Aorta (tissue), 5 donors: ENCODE measurements at regions of chr4 and their contacts with region 1.

Region 1: DNA sequence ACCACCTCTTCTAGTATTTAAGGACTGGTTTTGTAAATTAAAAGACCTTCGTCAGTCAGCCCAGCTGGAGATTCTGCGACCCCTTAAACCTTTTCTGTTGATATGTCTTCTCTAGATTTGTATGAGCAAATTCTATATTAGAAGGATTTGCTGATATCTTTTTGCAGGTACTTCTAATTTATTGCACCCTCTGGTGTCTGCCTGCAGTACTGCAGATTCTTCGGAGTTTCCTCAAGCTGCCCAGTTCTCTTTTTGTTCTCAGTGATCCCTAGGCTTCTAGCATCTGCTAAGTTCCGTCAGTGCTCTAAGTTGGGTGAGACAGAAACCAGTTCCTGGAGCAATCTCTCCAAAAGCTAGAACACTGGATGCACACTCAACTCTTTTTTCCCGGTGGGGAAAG is 545.2 kb downstream of the C4orf33 start:
- DNase-seq: peak in 1 of 2 donors; percentile 57
- ATAC-seq: peak; percentile 62
- H3K4me3 ChIP-seq: no peak overlapping the region
- H3K27ac ChIP-seq: no peak overlapping the region
- H3K4me1 ChIP-seq: no peaks in the 10 kb centered on the region
- H3K27me3 ChIP-seq: no peaks in the 10 kb centered on the region

Region 2: DNA sequence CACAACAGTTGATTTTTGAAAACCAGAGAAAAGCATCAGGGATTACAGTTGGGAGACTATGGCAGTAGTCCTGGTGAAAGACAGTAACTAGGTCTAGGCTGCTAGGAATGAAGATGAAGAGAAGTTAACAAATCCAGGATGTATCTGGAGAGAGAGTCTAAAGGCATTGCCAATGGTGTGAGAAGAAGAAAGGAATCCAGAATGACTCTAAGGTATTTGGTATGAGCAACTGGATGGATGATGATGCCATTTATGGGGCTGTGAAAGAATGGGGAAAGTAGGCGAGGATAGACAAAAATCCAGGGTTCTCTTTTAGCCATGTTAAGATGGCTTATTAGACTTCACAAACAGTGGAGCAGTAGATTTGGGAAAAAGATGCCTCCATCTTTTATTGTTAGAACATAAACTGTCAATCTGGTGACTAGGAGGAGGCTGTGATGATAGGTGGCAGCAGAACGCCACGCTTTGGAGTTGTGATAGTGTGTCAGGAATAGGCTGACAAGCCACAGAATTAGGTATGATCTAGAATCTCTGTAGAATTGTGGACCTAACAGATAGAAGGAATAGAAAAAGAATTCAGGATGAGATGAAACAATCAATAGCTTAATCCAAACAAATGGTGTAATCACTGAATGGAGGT is 859.0 kb before region 1 on chr4:
- intact Hi-C with region 1: no loop called
- DNase-seq: no peak
- ATAC-seq: no peak
- H3K4me3 ChIP-seq: no peak overlapping the region
- H3K27ac ChIP-seq: no peak overlapping the region
- H3K4me1 ChIP-seq: no peaks in the 10 kb centered on the region
- H3K27me3 ChIP-seq: no peaks in the 10 kb centered on the region

Region 3: GRCh38 chr4:129179276-129179675 is 461.9 kb before region 1 on chr4:
- intact Hi-C with region 1: no loop called
- DNase-seq: no peak
- ATAC-seq: no peak
- H3K4me3 ChIP-seq: no peak overlapping the region
- H3K27ac ChIP-seq: no peak overlapping the region
- H3K4me1 ChIP-seq: no peaks in the 10 kb centered on the region
- H3K27me3 ChIP-seq: no peaks in the 10 kb centered on the region

Region 4: DNA sequence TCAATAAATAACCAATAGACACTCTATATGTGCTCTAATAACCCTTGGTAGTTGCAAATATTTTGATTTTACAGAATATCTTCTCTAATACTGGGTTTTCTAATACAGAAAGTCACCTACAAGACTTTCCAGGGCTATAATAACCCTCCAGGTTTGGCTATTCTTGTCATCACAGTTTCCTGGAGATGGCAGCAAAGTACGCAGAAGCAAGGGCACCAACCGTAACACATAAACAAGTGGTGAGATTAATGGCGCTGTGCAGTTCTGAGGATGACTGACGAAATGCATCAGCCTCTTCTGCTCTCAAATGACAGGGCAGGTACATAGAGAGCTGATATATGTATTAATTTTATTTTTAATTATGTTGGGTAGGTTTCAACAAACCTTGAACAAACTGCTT is 422.8 kb before region 1 on chr4:
- intact Hi-C with region 1: loop called in 1 of 2 experiments (anchors 5 kb)
- DNase-seq: no peak
- ATAC-seq: peak; percentile 80
- H3K4me3 ChIP-seq: peak overlapping the region; percentile 21 to 59
- H3K27ac ChIP-seq: no peak overlapping the region
- H3K4me1 ChIP-seq: peaks cover 0 to 3% of the 10 kb centered on the region in 2 donors
- H3K27me3 ChIP-seq: no peaks in the 10 kb centered on the region

Region 5: GRCh38 chr4:129362674-129363274 is 278.4 kb before region 1 on chr4:
- intact Hi-C with region 1: loop called (anchors 5 kb)
- DNase-seq: peak in 1 of 2 donors; percentile 54
- ATAC-seq: peak; percentile 76
- H3K4me3 ChIP-seq: no peak overlapping the region
- H3K27ac ChIP-seq: no peak overlapping the region
- H3K4me1 ChIP-seq: no peaks in the 10 kb centered on the region
- H3K27me3 ChIP-seq: no peaks in the 10 kb centered on the region